Activated B cell treated with CpG ODN at 0.5 μM for 24 hours (primary cell): ENCODE measurements at regions of chr2 and their contacts with region 1.

Region 1: GRCh38 chr2:237072067-237072931 is 13.4 kb upstream of the COPS8 start:
- DNase-seq: peak; percentile 60
- ATAC-seq: peak; percentile 56
- H3K4me3 Mint-ChIP-seq: no peak overlapping the region
- H3K27ac Mint-ChIP-seq: no peak overlapping the region
- H3K4me1 Mint-ChIP-seq: no peaks in the 10 kb centered on the region
- H3K27me3 Mint-ChIP-seq: no peaks in the 10 kb centered on the region
- CTCF ChIP-seq: peak; percentile 87

Region 2: DNA sequence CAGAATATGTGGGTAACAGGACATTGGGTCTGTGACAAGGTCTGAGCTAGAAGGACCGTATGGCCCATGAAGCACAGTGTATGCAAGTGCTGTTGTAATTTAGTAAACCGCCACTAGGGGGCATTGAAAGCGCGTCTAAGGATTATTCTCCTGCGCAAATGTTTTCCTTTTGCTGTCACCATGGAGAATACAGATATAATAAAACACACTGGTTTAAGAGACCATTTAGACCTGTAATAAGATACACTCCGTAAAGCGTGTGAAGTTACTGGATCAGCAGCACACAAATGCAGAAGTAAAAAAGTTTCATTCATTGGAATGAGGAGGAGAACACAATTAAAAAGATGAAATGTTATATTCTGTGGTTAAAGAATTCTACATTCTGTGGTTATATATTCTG is 1306.0 kb before region 1 on chr2:
- CTCF ChIA-PET with region 1: interaction called, 4 read pairs
- POLR2A ChIA-PET with region 1: no interaction called
- intact Hi-C with region 1: loop called (anchors 1 kb)
- DNase-seq: no peak
- ATAC-seq: peak; percentile 60
- H3K4me3 Mint-ChIP-seq: no peak overlapping the region
- H3K27ac Mint-ChIP-seq: no peak overlapping the region
- H3K4me1 Mint-ChIP-seq: peaks cover 2% of the 10 kb centered on the region
- H3K27me3 Mint-ChIP-seq: peaks cover 3% of the 10 kb centered on the region
- CTCF ChIP-seq: peak; percentile 96

Region 3: DNA sequence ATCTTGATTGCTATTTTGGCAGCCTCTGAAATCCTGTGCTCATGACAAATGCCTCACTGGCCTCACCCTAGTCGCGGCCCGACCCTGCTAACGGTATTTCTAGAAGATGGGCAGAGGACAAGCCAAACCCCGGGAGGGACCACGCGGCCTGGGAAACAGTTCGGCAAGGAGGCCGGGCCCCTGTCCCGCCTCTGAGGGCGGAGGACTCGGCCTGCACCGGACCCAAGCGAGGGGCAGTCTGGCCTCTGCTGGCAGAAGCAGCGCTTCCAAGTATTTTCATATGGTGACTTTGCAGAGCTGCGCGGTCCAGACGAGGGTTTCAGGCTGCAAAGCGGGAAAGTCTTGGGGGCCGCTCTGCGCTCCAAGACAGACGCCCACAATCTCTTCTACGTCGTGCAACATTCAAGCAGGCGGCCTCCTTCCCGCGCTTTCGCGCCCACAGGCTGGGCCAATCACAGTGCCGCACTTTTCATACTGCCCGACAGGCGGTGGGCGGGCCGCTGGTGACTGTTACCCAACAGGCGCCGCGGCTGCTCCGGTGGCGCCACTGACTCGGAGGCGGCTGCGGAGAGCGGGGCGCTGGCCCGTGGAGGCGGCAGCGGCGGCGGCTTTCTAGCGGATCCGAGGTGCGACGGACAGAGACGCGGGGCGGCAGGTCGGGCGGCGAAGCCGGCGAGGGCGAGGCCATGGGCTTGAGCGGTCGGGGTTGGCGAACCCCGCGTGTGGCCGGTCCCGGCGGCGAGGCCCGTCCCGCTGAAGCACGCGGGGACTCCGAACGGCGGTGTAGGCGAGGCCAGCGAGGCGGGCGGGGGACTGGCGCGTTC is 726.1 kb after region 1 on chr2 and contains the start of gene RBM44:
- CTCF ChIA-PET with region 1: no interaction called
- POLR2A ChIA-PET with region 1: no interaction called
- intact Hi-C with region 1: no loop called
- DNase-seq: no peak
- ATAC-seq: no peak
- H3K4me3 Mint-ChIP-seq: no peak within 1 kb of the TSS
- H3K27ac Mint-ChIP-seq: no peak within 1 kb of the TSS
- H3K4me1 Mint-ChIP-seq: peaks cover 4% of the 10 kb centered on the region
- H3K27me3 Mint-ChIP-seq: no peaks in the 10 kb centered on the region
- CTCF ChIP-seq: no peak
- total RNA-seq, gene RBM44: 0.69 and 1.3 TPM in 2 replicates

Region 4: GRCh38 chr2:238895891-238896600 is 1823.7 kb after region 1 on chr2:
- CTCF ChIA-PET with region 1: no interaction called
- POLR2A ChIA-PET with region 1: no interaction called
- intact Hi-C with region 1: no loop called
- DNase-seq: no peak
- ATAC-seq: no peak
- H3K4me3 Mint-ChIP-seq: no peak overlapping the region
- H3K27ac Mint-ChIP-seq: no peak overlapping the region
- H3K4me1 Mint-ChIP-seq: no peaks in the 10 kb centered on the region
- H3K27me3 Mint-ChIP-seq: no peaks in the 10 kb centered on the region
- CTCF ChIP-seq: no peak